Endothelial cell of umbilical vein (primary cell): ENCODE measurements at regions of chr22 and their contacts with region 1.

Region 1: DNA sequence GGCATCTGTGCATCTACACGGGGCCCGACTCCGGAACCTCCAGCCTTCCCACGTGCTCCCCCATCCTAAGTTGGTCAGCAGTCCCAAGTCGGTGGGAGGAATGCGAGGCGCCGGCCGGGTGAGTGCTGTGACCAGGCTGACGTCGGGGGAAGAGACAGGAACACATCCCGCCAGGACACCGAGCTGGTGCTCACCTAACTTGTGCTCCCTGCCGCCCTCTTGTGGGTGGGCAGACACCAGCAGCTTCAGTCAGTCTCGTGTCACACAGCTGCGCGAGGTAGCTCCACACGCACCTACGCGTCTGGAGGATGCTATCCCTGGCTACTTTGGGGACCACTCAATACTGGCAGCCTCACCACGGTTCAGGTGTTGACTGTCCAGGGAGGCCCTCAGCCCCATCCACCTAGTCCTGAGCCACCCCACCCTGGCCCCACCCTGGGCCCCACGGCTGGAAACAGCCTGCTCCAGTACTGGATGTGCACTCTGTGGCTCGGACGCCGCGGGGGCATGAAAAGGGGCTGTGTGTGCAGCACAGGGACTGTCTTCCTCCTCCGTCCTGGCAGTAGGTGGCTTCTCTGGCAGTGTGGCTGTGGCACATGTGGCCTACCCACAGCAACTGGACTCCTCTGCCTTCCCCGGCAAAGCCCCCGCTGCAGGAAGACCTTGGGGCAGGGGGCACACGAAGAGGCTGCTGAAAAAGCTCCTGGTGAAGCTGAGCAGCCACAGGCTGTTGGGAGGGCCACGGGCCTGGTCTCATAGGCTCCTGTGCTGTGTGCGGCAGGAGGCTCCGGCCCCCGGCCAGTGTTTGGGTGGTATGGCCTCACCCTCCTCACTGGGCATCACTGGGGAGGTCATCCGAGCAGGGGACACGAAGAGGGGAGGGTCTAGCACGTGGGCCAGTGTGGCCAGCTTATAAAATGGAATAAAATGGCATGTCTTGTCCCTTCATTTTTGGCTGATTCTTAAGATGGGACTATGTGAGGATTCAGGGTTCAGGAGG is 11.2 kb upstream of the BID start:
- DNase-seq: peak; percentile 11
- H3K4me3 ChIP-seq: no peak overlapping the region
- H3K27ac ChIP-seq: no peak overlapping the region
- H3K4me1 ChIP-seq: peaks cover 9% of the 10 kb centered on the region
- H3K27me3 ChIP-seq: no peaks in the 10 kb centered on the region
- CTCF ChIP-seq: peak; percentile 42 to 64
- POLR2A ChIP-seq: no peak

Region 2: DNA sequence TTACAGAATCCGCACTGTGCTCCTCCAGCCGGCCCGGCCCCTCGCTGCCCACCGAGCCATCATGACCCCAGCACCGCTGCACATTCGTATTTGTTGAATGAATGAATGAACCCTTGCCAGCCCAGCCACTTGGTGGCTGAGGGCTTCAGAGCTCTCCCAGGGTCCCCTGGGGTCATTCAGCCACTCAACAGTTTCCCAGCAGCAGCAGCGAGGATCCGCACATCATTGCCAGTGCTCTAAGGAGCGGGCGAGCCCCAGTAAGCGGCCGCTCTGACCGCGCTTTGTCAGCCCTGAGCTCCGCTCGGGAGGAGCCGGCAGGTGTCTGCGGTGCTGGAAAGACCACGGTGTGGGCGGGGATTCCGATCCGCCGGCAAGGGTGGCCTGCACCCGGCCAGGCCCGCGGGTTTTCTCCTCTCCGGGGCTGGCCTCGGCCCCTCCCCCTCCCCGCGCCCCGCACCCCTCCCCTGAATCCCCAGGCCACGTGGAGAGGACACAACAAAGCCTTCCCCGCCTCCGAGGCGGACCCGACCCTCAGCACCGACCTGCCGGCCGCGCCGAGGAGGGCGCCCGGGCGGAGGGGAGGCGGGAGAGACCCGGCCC is 11.8 kb before region 1 on chr22:
- CTCF ChIA-PET with region 1: interaction called, 13 read pairs
- POLR2A ChIA-PET with region 1: no interaction called
- dilution Hi-C with region 1: no loop called
- intact Hi-C with region 1: no loop called
- DNase-seq: peak; percentile 34
- H3K4me3 ChIP-seq: peak overlapping the region; percentile 52 to 72 (median 59)
- H3K27ac ChIP-seq: peak overlapping the region; percentile 34
- H3K4me1 ChIP-seq: peaks cover 13% of the 10 kb centered on the region
- H3K27me3 ChIP-seq: no peaks in the 10 kb centered on the region
- CTCF ChIP-seq: no peak
- POLR2A ChIP-seq: no peak

Region 3: DNA sequence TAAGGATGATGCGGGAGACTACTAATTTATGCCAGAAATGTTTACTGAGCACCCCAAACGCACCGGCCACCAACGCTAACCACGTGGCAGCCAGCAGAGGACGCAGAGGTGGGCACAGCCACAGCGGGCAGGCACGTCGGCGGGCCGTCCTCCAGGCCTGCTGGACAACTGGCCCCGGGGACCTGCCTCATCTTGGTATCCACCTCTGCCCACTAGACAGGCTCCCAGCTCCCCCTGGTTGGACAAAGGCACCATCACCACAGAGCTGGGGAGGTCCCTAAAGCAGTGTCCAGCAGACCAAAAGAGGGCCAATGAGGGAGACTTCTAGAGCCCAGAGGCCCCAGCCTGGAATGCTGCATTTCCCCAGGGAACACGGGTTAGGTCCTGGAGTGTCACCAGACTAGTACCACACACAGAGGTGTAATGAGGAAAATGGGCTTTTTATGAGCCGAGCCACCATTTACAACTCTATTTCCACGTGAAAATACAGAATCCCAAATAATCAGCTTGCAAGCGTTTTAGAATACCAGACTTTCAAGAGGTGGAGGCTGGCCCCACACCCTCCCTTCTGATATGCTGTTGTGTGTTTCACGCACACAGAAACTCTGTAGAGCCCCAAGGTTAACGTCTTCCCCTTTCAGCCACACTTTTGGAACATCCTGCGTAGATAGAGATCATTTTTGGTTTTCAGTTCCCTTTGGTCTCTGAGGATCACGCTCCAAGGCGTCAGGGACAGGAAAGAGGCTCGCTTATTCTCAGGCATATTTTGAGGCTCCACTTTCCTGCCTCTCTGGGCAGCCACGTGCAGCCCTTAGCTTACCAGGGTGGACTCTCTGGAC is 12.5 kb after region 1 on chr22:
- CTCF ChIA-PET with region 1: no interaction called
- POLR2A ChIA-PET with region 1: no interaction called
- dilution Hi-C with region 1: no loop called
- intact Hi-C with region 1: no loop called
- DNase-seq: no peak
- H3K4me3 ChIP-seq: no peak overlapping the region
- H3K27ac ChIP-seq: no peak overlapping the region
- H3K4me1 ChIP-seq: no peaks in the 10 kb centered on the region
- H3K27me3 ChIP-seq: no peaks in the 10 kb centered on the region
- CTCF ChIP-seq: no peak
- POLR2A ChIP-seq: no peak

Region 4: GRCh38 chr22:18024276-18024947 is 238.9 kb after region 1 on chr22 and contains the start of gene MICAL3:
- CTCF ChIA-PET with region 1: no interaction called
- POLR2A ChIA-PET with region 1: no interaction called
- dilution Hi-C with region 1: no loop called
- intact Hi-C with region 1: no loop called
- DNase-seq: peak; percentile 64
- H3K4me3 ChIP-seq: peak within 1 kb of the TSS; percentile 41 to 61 (median 48)
- H3K27ac ChIP-seq: no peak within 1 kb of the TSS
- H3K4me1 ChIP-seq: peaks cover 13% of the 10 kb centered on the region
- H3K27me3 ChIP-seq: peaks cover 12 to 33% of the 10 kb centered on the region in 2 experiments
- CTCF ChIP-seq: peak; percentile 73 to 76
- POLR2A ChIP-seq: no peak
- total RNA-seq, gene MICAL3: 63.4 and 63.7 TPM in 2 replicates